Activated T-helper 1 cell treated with anti-CD3 and anti-CD28 coated beads, Interleukin-12 subunit alpha, Interleukin-12 subunit beta, Interleukin-2, Interleukin-4 antibody, amounts not matched to agents 30 ng/mL and 10 ng/mL and 1 ng/mL, durations not matched to agents 14 hours and 24 hours and 36 hours (primary cell): ENCODE measurements at regions of chr4 and their contacts with region 1.

Region 1: DNA sequence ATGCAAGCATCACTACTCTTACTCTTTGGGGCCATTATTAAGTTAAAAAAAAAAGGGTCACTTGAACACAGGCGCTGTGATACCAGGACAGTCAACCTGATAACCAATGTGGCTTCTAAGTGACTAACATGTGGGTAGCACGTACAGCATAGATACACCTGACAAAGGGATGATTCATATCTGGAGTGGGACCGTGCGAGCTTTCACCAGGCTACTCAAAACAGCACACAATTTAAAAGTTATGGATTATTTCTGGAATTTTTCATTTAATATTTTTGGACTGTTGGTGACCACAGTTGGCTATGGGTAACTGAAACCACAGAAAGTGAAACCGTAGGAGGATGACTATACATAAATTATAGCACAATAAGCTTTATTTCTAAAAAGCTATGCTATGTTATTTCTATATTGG is 113.8 kb upstream of the STIM2 start:
- DNase-seq: peak; percentile 19
- H3K4me3 Mint-ChIP-seq: no peak overlapping the region
- H3K27ac Mint-ChIP-seq: peak overlapping the region; percentile 35
- H3K4me1 Mint-ChIP-seq: peaks cover 18% of the 10 kb centered on the region
- H3K27me3 Mint-ChIP-seq: peaks cover 27% of the 10 kb centered on the region

Region 2: DNA sequence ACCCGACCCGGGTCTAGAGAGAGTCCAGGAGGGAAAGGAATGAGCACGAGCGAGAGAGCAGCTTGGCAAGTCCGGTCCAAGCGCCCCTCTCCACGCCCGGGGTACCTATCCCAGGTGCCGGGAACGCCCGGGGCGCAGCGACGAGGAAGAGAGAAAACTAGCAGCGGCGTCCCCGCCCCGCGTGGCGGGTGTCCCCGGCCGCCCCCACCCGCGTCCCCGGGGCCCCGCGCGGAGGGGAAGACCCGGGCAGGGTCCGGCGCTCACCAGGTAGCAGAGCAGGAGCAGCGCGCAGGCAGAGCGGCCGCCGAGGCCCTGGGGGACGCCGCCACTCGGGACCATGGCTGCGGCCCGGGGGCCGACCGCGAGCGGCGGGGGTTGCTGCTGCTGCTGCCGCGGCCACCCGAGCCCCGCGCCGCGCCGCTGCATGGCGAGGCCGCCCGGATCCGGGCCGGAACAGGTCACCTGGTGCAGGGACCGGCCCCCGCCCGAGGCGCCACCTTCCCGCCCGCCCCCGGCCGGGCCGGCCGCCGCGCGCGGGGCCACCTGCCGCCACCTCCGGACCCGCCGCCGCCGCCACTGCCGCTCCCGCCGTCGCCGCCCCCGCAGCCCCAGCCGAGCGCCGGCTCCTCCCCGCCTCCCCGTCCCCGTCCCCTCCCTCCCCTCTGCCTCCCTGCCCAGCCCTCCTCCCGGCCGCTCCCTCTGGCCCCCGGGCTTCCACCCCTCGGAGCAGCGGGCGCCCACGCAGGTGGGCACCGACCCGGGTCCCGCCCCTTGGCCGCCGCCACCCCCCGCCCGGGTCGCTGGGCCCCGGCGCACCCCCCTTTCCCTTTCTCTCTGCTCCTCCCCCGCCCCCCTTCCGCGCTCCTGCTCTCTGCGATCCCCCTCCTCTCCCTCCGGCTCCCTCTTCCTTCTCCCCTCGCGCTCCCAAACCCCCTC is 884.1 kb before region 1 on chr4 and contains the start of gene SEL1L3:
- intact Hi-C with region 1: loop called (anchors 5 kb)
- DNase-seq: peak; percentile 37
- H3K4me3 Mint-ChIP-seq: peak within 1 kb of the TSS; percentile 99
- H3K27ac Mint-ChIP-seq: peak within 1 kb of the TSS; percentile 99
- H3K4me1 Mint-ChIP-seq: peaks cover 42% of the 10 kb centered on the region
- H3K27me3 Mint-ChIP-seq: no peaks in the 10 kb centered on the region
- total RNA-seq, gene SEL1L3: 36.0 and 37.1 TPM in 2 replicates

Region 3: GRCh38 chr4:26719954-26720552 is 26.8 kb before region 1 on chr4:
- intact Hi-C with region 1: no loop called
- DNase-seq: no peak
- H3K4me3 Mint-ChIP-seq: no peak overlapping the region
- H3K27ac Mint-ChIP-seq: no peak overlapping the region
- H3K4me1 Mint-ChIP-seq: no peaks in the 10 kb centered on the region
- H3K27me3 Mint-ChIP-seq: peaks cover 2% of the 10 kb centered on the region

Region 4: DNA sequence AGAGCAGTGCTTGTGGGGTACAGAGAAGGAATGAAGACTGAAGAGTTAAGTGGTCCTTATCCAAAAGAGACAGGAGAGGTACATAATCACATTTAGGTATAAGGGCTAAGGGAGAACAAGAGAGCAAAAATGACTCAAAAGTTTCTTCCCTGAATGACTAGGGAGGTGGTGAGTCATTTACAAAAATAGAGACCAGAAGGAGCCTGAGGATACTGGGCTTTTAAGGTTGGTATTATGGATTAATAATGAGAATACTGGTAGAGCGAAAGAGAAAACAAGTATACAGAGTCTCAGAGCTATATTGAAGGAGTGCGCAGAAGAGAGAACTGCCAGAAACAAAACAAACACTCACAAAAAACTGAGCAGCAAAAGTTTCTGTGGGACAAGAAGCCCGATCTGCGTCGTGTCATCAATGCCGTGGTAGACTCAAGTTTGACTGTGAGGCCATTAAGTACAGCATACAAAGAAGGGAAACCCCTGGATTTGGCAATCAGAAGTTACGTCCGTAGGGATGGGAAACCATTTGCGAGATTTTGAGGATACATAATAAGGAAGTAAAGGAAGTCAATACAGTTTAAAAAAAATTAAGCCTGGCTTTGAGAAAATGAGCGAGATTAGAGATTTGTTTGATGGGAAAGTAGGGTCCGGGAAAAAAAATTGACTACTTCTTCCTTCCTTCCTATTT is 15.3 kb before region 1 on chr4:
- intact Hi-C with region 1: loop called (anchors 1 kb)
- DNase-seq: no peak
- H3K4me3 Mint-ChIP-seq: no peak overlapping the region
- H3K27ac Mint-ChIP-seq: no peak overlapping the region
- H3K4me1 Mint-ChIP-seq: peaks cover 11% of the 10 kb centered on the region
- H3K27me3 Mint-ChIP-seq: peaks cover 3% of the 10 kb centered on the region

Region 5: DNA sequence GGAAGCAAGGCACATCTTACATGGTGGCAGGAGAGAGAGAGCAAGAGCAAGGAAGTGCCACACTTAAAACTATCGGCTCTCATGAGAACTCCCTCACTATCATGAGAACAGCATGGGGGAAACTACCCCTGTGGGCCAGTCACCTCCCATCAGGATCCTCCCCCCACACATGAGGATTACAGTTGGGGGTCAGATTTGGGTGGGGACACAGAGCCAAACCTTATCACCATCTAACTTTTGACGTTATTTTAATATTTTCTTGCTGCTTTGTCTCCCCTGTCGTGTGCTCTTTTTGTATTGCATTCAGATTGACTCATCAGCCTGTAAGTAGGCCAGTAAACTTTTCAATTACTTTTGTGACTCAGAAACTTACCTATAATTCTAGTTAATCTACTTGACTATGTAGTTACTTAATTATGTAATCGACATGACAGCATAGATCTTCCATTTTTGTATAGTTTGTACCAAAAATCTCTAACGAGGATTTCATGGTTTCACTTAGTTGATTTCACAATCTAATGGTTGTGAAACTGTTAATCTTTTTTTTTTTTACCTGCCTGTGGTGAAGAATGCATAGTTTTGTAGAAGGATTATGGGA is 132.1 kb after region 1 on chr4:
- intact Hi-C with region 1: loop called (anchors 2 kb)
- DNase-seq: no peak
- H3K4me3 Mint-ChIP-seq: peak overlapping the region; percentile 20
- H3K27ac Mint-ChIP-seq: peak overlapping the region; percentile 89
- H3K4me1 Mint-ChIP-seq: peaks cover 78% of the 10 kb centered on the region
- H3K27me3 Mint-ChIP-seq: no peaks in the 10 kb centered on the region

Region 6: DNA sequence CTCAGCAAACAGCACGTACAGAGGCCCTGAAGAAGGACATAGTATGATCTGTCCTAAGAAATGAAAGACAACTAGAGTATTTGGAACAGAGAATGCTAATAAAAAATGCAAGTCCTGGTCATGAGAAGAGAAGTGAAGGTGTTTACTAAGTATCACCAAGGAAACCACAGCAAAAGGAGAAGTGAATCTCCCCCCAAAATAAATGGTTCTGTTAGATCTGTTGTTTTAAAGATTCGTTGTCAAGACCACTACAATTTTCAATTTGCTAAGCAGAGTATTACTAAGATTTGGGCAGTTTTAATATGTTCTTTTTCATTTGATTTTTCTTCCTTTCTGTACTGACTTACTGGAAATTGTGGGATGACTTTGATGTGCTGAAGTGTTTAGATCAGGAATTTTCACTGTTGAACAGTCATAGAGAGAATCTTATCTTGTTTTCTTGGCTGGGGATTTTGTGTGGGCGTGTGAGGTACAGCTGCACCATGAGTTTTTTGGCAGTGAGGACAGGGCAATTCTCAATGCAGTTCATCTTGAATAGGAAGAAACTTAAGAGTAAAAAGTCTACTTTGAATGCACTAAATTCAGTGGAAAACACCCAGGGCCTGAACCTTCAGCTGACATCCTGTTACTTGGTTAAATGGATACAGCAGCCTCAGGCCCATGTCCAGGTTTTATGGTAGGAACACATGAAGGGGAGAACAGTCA is 246.0 kb after region 1 on chr4:
- intact Hi-C with region 1: loop called (anchors 2 kb)
- DNase-seq: no peak
- H3K4me3 Mint-ChIP-seq: no peak overlapping the region
- H3K27ac Mint-ChIP-seq: no peak overlapping the region
- H3K4me1 Mint-ChIP-seq: peaks cover 24% of the 10 kb centered on the region
- H3K27me3 Mint-ChIP-seq: no peaks in the 10 kb centered on the region

Region 7: GRCh38 chr4:27779827-27780226 is 1033.0 kb after region 1 on chr4:
- intact Hi-C with region 1: no loop called
- DNase-seq: no peak
- H3K4me3 Mint-ChIP-seq: no peak overlapping the region
- H3K27ac Mint-ChIP-seq: no peak overlapping the region
- H3K4me1 Mint-ChIP-seq: no peaks in the 10 kb centered on the region
- H3K27me3 Mint-ChIP-seq: no peaks in the 10 kb centered on the region